ENCODE measurements at regions of chr16 and their contacts with region 1.

Region 1: DNA sequence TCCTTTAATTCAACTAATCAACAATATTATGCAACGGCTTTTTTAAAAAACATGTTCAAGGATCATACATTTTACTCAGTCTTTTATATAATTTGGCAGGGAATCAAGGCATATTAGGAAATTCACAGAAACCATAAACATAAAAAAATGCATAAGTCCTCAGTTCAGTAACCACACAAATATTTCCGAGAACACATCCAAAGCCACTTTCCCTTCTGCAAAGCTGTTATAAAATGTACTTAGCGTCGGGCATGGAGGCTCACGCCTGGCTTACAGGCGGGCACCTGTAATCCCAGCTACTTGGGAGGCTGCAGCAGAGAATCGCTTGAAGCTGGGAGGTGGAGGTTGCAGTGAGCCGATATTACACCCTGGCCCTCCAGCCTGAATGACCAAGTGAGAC is 9.7 kb upstream of the ZC3H7A start:
- DNase-seq: no peak
- ATAC-seq: no peak

Region 2: DNA sequence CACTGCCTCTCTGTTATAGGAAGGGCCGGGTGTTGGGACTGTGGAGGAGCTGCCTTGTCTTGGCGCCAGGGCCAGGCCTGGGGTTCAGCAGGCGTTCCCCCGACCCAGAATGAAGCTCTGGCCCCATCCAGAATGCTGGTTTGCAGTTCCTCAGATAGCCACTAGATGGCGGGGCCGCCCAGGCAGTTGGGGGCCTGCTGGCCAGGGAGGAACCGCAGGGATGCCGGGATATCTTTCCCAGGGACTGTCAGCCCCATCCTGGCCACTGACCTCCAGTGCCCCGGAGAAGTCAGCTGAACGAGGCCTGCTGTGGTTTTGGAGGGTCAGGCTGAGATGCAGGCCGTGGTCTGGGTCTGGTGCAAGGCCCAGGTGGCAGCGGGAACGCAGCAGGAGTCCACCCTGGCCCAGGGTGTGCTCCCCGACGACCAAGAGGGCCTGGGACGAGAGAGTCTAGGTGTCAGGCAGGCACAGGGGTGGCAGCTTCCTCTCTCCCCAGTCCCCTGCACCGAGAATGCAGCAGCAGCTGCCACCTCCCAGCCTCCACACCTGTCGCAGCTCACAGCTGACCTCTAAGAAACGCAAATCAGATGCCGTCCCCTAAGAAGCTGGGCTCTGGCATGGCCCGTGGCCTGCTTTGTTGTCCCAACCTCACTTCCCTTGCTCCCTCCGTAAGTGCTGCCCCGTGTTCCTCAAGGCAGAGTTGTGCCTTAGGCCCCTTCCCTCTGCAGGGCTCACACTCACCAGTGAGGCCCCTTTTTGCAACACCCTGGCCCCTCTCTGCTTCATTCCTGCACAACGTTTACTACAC is 410.3 kb before region 1 on chr16:
- intact Hi-C with region 1: loop called (anchors 5 kb)
- DNase-seq: peak; percentile 85
- ATAC-seq: peak; percentile 71